ENCODE measurements at regions of chr2 and their contacts with region 1.

Region 1: GRCh38 chr2:112884869-112885505 is 26.0 kb upstream of the IL37 start:
- DNase-seq: peak; percentile 83
- CTCF ChIP-seq: peak; percentile 94

Region 2: GRCh38 chr2:112733456-112733855 is 151.5 kb before region 1 on chr2:
- CTCF ChIA-PET with region 1: interaction called, 34 read pairs
- POLR2A ChIA-PET with region 1: no interaction called
- DNase-seq: no peak
- CTCF ChIP-seq: no peak

Region 3: GRCh38 chr2:112764071-112765044 is 120.6 kb before region 1 on chr2 and contains the start of gene CKAP2L:
- CTCF ChIA-PET with region 1: interaction called, 23 read pairs
- POLR2A ChIA-PET with region 1: no interaction called
- DNase-seq: peak; percentile 97
- CTCF ChIP-seq: no peak

Region 4: GRCh38 chr2:112829101-112829960 is 55.7 kb before region 1 on chr2:
- CTCF ChIA-PET with region 1: interaction called, 12 read pairs
- POLR2A ChIA-PET with region 1: no interaction called
- DNase-seq: no peak
- CTCF ChIP-seq: no peak

Region 5: DNA sequence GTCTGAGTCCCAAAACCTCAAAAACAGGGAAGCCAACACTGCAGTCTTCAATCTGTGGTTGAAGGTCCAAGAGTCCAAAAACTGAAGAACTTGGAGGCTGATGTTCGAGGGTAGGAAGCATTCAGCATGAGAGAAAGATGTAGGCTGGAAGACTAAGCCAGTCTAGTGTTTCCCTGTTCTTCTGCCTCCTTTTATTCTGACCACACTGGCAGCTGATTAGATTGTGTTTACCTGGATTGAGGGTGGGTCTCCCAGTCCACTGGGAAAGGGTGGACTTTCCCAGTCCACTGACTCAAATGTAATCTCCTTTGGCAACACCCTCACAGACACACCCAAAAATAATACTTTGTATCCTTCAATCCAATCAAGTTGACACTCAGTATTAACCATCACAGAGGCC is 20.9 kb before region 1 on chr2:
- CTCF ChIA-PET with region 1: interaction called, 13 read pairs
- POLR2A ChIA-PET with region 1: no interaction called
- DNase-seq: no peak
- CTCF ChIP-seq: no peak

Region 6: DNA sequence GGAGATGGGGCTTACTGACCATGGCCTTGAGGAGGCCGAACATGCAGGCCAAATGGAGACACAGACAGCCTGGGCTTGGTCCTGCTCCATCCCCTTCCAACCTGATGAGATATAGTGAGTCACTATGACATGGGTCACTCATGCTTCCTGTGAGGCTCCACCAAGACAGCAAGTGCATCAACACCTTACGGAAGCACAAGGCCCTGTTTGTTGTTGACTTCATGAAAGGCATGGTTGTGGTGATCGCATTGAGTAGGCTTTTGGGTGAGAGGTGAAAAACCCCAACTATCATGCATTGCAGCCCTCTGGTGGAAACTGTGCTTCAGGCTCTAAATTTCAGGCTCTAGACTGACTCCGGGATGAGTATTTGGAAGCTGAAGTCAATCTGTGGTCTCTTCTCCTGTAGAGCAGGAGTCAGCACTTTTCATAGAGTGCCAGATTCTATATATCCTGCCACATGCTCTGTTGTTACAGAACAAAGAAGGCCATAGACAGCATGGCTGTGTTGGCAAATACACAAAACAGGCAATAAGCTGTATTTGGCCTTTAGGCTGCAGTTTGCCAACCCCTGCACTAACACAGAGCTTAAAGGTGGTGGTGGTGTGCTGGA is 36.0 kb after region 1 on chr2:
- CTCF ChIA-PET with region 1: interaction called, 13 read pairs
- POLR2A ChIA-PET with region 1: no interaction called
- DNase-seq: no peak
- CTCF ChIP-seq: no peak

Region 7: DNA sequence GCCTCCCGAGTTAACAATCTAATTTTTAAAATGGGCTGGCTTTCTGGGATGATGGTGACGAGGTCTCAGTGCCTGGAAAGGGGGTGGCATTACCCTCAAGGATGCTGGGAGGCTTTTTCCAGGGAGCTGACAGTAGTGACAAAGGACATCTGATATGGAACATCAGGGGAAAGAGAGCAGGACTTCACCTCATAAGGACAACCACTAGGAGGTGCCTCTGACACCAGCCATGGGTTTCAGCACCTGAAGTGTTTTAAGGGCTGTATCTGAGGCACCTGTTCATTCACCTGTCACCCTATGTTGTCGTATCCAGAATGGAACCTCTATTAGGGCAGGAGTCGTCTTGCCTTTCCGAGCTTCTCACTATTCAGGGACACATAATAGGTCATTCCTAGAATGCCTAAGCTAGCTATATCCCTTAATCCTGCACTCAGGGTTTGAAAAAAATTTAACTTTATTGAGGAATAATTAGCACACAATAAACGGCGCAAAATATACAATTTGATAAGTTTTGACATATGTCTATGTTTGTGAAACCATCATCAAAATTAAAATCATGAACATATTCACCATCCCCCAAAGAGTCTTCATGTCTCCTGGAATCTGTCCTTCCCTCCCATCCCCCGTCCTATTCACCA is 157.0 kb after region 1 on chr2:
- CTCF ChIA-PET with region 1: no interaction called
- POLR2A ChIA-PET with region 1: no interaction called
- DNase-seq: no peak
- CTCF ChIP-seq: no peak